ENCODE measurements at regions of chr10 and their contacts with region 1.

Region 1: DNA sequence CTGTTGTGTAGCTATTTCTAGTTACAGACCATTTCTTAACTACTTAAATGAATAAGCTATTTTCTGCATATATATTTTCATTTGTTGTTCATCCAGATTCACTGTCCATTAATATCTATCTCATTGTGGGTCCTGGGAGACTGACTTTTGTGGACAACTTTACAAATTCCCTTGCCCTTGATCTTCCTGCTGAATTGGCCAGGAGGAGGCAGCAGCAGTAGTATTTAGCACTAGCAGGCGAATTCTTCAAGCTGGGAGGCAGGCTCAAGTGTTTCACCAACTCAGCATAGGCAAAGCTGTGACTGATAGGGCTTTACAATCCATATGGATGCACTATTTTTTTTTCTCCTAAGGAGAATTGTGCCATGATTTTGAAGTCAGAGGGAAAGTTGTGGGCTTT is 461.0 kb upstream of the NRG3 start:
- DNase-seq: peak; percentile 27 to 35
- H3K4me3 ChIP-seq: no peak overlapping the region
- H3K4me3 Mint-ChIP-seq: no peak overlapping the region
- H3K27ac Mint-ChIP-seq: no peak overlapping the region
- H3K4me1 ChIP-seq: no peaks in the 10 kb centered on the region
- H3K4me1 Mint-ChIP-seq: no peaks in the 10 kb centered on the region
- H3K27me3 ChIP-seq: no peaks in the 10 kb centered on the region
- H3K27me3 Mint-ChIP-seq: no peaks in the 10 kb centered on the region
- CTCF ChIP-seq: peak in 1 of 2 experiments; percentile 55

Region 2: DNA sequence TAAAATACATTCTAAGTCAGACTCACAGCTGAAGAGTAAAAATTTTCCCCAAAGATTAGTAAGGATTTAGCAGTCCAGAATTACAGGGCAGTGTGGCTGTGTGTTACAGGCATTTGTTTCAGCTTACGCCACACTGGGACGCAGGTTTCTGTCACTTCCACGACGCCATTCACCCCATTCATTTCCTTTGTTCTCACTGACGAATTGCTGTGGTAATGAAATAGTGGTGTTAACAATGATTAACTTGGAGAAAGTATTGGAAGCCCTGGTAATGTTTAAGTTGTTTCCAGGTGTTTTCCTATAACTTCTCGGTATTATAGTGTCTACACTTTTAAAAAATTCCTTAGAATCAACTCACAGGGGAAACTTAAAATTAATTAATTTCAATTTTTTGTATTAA is 505.4 kb before region 1 on chr10:
- CTCF ChIA-PET with region 1: no interaction called
- POLR2A ChIA-PET with region 1: no interaction called
- intact Hi-C with region 1: no loop called
- DNase-seq: no peak
- H3K4me3 ChIP-seq: no peak overlapping the region
- H3K4me3 Mint-ChIP-seq: no peak overlapping the region
- H3K27ac Mint-ChIP-seq: no peak overlapping the region
- H3K4me1 ChIP-seq: no peaks in the 10 kb centered on the region
- H3K4me1 Mint-ChIP-seq: no peaks in the 10 kb centered on the region
- H3K27me3 ChIP-seq: no peaks in the 10 kb centered on the region; the same call in 1 of the 2 replicates
- H3K27me3 Mint-ChIP-seq: peaks cover 13% of the 10 kb centered on the region
- CTCF ChIP-seq: no peak

Region 3: DNA sequence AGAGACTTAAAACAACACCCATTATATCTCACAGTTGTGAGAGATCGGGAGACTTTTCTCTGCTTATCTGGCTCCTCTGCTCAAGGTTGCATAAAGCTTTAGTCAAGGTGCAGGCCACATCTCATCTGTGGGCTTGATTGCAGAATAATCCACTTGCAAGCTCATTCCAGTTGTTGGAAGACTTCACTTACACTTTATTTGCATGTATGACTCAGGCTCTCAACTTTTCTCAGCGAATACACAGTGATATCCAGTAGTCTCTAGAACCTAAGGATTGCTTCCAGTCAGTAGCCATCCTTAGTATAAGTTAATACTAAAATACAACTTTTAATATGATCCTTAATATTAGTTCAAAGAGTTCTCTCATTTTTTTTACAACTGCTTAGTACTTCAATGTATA is 25.4 kb after region 1 on chr10:
- CTCF ChIA-PET with region 1: no interaction called
- POLR2A ChIA-PET with region 1: no interaction called
- intact Hi-C with region 1: no loop called
- DNase-seq: no peak
- H3K4me3 ChIP-seq: no peak overlapping the region
- H3K4me3 Mint-ChIP-seq: no peak overlapping the region
- H3K27ac Mint-ChIP-seq: no peak overlapping the region
- H3K4me1 ChIP-seq: no peaks in the 10 kb centered on the region
- H3K4me1 Mint-ChIP-seq: no peaks in the 10 kb centered on the region
- H3K27me3 ChIP-seq: no peaks in the 10 kb centered on the region
- H3K27me3 Mint-ChIP-seq: no peaks in the 10 kb centered on the region
- CTCF ChIP-seq: no peak

Region 4: DNA sequence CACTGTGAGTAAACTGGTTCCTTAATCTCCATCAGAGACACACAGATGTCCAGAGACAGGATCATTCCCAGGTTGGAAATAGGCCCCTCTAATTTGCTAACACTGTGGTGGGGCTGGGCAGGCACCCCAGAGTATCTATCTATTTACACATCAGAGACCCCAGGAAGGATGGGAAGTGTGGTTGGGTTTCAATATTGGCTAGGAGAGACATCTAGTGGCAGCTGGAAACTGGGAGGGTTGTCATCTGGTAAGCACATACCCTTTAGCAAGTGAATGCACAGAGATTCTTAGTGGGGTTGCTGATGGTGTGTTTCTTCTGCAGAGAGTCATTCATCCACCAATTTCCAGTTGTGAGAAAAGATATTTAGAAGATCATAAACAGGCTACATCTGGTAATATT is 424.9 kb after region 1 on chr10:
- CTCF ChIA-PET with region 1: no interaction called
- POLR2A ChIA-PET with region 1: no interaction called
- intact Hi-C with region 1: loop called (anchors 5 kb)
- DNase-seq: peak in 1 of 2 experiments; percentile 14
- H3K4me3 ChIP-seq: no peak overlapping the region
- H3K4me3 Mint-ChIP-seq: no peak overlapping the region
- H3K27ac Mint-ChIP-seq: no peak overlapping the region
- H3K4me1 ChIP-seq: no peaks in the 10 kb centered on the region
- H3K4me1 Mint-ChIP-seq: no peaks in the 10 kb centered on the region
- H3K27me3 ChIP-seq: no peaks in the 10 kb centered on the region
- H3K27me3 Mint-ChIP-seq: peaks cover 10% of the 10 kb centered on the region
- CTCF ChIP-seq: peak in 1 of 2 experiments; percentile 33

Measured in Caco-2 (cell line).